Calu3 (cell line): ENCODE measurements at regions of chr3 and their contacts with region 1.

Region 1: GRCh38 chr3:17258823-17259436 is 374.2 kb downstream of the PLCL2 start:
- DNase-seq: peak; percentile 3
- H3K4me3 Mint-ChIP-seq: no peak overlapping the region
- H3K27ac Mint-ChIP-seq: no peak overlapping the region
- H3K4me1 Mint-ChIP-seq: no peaks in the 10 kb centered on the region
- H3K27me3 Mint-ChIP-seq: no peaks in the 10 kb centered on the region
- CTCF ChIP-seq: peak; percentile 40

Region 2: DNA sequence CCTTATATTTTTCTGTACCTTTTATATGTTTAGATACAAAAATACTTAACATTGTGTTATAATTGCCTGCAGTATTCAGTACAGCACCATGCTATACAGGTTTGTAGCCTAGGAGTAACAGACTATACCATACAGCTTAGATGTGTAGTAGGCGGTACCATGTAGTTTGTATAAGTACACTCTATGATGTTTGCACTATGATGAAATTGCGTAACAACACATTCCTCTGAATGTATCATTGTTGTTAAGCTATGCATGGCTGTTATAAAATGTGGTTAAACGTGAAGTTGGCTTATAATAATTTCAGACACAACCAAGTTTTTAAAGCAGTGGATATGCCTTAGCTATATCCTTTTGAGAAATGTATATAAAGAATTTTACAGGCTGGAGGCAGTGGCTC is 45.8 kb before region 1 on chr3:
- CTCF ChIA-PET with region 1: no interaction called
- intact Hi-C with region 1: no loop called
- DNase-seq: no peak
- H3K4me3 Mint-ChIP-seq: no peak overlapping the region
- H3K27ac Mint-ChIP-seq: no peak overlapping the region
- H3K4me1 Mint-ChIP-seq: no peaks in the 10 kb centered on the region
- H3K27me3 Mint-ChIP-seq: no peaks in the 10 kb centered on the region
- CTCF ChIP-seq: no peak

Region 3: GRCh38 chr3:17412950-17413530 is 154.1 kb after region 1 on chr3:
- CTCF ChIA-PET with region 1: no interaction called
- intact Hi-C with region 1: loop called (anchors 1 kb)
- DNase-seq: peak; percentile 21
- H3K4me3 Mint-ChIP-seq: no peak overlapping the region
- H3K27ac Mint-ChIP-seq: no peak overlapping the region
- H3K4me1 Mint-ChIP-seq: no peaks in the 10 kb centered on the region
- H3K27me3 Mint-ChIP-seq: no peaks in the 10 kb centered on the region
- CTCF ChIP-seq: peak; percentile 57